Activated CD4-positive, alpha-beta T cell treated with anti-CD3 and anti-CD28 coated beads for 36 hours (primary cell): ENCODE measurements at regions of chr1 and their contacts with region 1.

Region 1: DNA sequence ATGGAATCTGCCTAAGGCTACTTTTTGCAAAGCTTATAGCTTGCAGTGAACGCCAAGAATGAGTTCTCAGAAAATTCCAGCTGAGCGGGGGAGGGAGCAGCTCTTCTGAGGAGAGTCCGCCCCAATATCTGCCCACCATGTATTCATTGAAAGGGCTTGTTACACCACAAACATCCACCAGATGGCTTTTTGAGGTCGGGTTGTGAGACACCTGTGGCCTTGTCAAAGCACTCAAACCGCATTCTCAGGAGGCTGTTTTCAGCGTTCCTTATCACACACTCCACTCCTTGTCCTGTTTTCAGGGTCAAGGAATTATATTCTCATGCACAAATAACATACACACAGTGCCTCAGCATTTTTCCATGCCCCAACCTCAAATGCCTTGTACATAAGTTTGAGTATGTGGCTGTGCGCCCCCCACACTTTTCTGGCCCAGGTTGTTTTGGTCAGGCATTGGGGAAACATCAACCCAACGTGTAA is 3.9 kb upstream of the C4BPB start:
- DNase-seq: peak; percentile 70
- ATAC-seq: peak; percentile 77
- H3K4me3 Mint-ChIP-seq: no peak overlapping the region
- H3K27ac Mint-ChIP-seq: no peak overlapping the region
- H3K4me1 Mint-ChIP-seq: peaks cover 20% of the 10 kb centered on the region
- H3K27me3 Mint-ChIP-seq: peaks cover 7% of the 10 kb centered on the region

Region 2: GRCh38 chr1:207069858-207070506 is 14.8 kb before region 1 on chr1:
- CTCF ChIA-PET with region 1: interaction called, 38 read pairs
- POLR2A ChIA-PET with region 1: no interaction called
- intact Hi-C with region 1: no loop called
- DNase-seq: no peak
- ATAC-seq: no peak
- H3K4me3 Mint-ChIP-seq: no peak overlapping the region
- H3K27ac Mint-ChIP-seq: no peak overlapping the region
- H3K4me1 Mint-ChIP-seq: peaks cover 29% of the 10 kb centered on the region
- H3K27me3 Mint-ChIP-seq: no peaks in the 10 kb centered on the region

Region 3: GRCh38 chr1:207672522-207673130 is 587.9 kb after region 1 on chr1:
- CTCF ChIA-PET with region 1: interaction called, 3 read pairs
- POLR2A ChIA-PET with region 1: no interaction called
- intact Hi-C with region 1: loop called in 1 of 2 experiments (anchors 5 kb)
- DNase-seq: peak; percentile 61
- ATAC-seq: peak; percentile 61
- H3K4me3 Mint-ChIP-seq: no peak overlapping the region
- H3K27ac Mint-ChIP-seq: no peak overlapping the region
- H3K4me1 Mint-ChIP-seq: peaks cover 5% of the 10 kb centered on the region
- H3K27me3 Mint-ChIP-seq: peaks cover 44% of the 10 kb centered on the region